ENCODE measurements at regions of chr1 and their contacts with region 1.

Region 1: GRCh38 chr1:10032590-10033358 is at the start of gene UBE4B:
- DNase-seq: peak; percentile 99
- H3K4me3 ChIP-seq: peak within 1 kb of the TSS; percentile 75
- H3K27ac ChIP-seq: peak within 1 kb of the TSS; percentile 88
- H3K4me1 ChIP-seq: peaks cover 4% of the 10 kb centered on the region
- H3K27me3 ChIP-seq: no peaks in the 10 kb centered on the region
- CTCF ChIP-seq: peak; percentile 80
- total RNA-seq, gene UBE4B: 58.0 and 59.4 TPM in 2 replicates

Region 2: GRCh38 chr1:9586147-9586766 is 446.5 kb before region 1 on chr1:
- CTCF ChIA-PET with region 1: no interaction called
- POLR2A ChIA-PET with region 1: interaction called, 11 read pairs
- intact Hi-C with region 1: no loop called
- DNase-seq: no peak
- H3K4me3 ChIP-seq: no peak overlapping the region
- H3K27ac ChIP-seq: no peak overlapping the region
- H3K4me1 ChIP-seq: peaks cover 14% of the 10 kb centered on the region
- H3K27me3 ChIP-seq: no peaks in the 10 kb centered on the region
- CTCF ChIP-seq: no peak

Region 3: DNA sequence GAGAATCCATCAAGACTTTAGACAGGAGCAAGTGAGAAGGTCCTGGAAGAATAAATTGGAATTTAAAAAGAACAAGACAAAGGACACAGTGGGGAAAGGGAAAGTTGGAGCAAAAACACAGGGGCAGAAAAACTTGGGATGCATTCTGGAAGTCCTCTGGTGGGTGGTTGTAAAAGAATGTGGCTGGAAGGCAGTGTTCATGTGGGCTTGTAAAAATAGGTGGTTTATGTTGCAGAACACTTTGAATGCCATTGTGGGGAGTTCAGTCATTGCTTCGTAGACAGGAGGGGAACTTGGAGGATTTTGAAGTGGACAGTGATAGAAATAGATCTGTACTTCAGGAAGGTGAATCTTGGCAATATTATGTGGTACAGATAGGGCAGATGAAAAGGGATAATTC is 192.8 kb after region 1 on chr1:
- CTCF ChIA-PET with region 1: no interaction called
- POLR2A ChIA-PET with region 1: no interaction called
- intact Hi-C with region 1: no loop called
- DNase-seq: no peak
- H3K4me3 ChIP-seq: no peak overlapping the region
- H3K27ac ChIP-seq: no peak overlapping the region
- H3K4me1 ChIP-seq: no peaks in the 10 kb centered on the region
- H3K27me3 ChIP-seq: no peaks in the 10 kb centered on the region
- CTCF ChIP-seq: no peak

Region 4: GRCh38 chr1:10299151-10299550 is 266.4 kb after region 1 on chr1:
- CTCF ChIA-PET with region 1: no interaction called
- POLR2A ChIA-PET with region 1: no interaction called
- intact Hi-C with region 1: no loop called
- DNase-seq: no peak
- H3K4me3 ChIP-seq: no peak overlapping the region
- H3K27ac ChIP-seq: no peak overlapping the region
- H3K4me1 ChIP-seq: no peaks in the 10 kb centered on the region
- H3K27me3 ChIP-seq: no peaks in the 10 kb centered on the region
- CTCF ChIP-seq: no peak

Measured in A673 (cell line).